PC-9 (cell line): ENCODE measurements at regions of chr15 and their contacts with region 1.

Region 1: GRCh38 chr15:71743861-71744382 is 66.4 kb upstream of the NR2E3 start:
- DNase-seq: peak in 1 of 2 experiments; percentile 37
- H3K4me3 ChIP-seq: no peak overlapping the region
- H3K27ac ChIP-seq: no peak overlapping the region
- H3K4me1 ChIP-seq: peaks cover 29% of the 10 kb centered on the region
- H3K27me3 ChIP-seq: no peaks in the 10 kb centered on the region
- CTCF ChIP-seq: peak; percentile 78

Region 2: DNA sequence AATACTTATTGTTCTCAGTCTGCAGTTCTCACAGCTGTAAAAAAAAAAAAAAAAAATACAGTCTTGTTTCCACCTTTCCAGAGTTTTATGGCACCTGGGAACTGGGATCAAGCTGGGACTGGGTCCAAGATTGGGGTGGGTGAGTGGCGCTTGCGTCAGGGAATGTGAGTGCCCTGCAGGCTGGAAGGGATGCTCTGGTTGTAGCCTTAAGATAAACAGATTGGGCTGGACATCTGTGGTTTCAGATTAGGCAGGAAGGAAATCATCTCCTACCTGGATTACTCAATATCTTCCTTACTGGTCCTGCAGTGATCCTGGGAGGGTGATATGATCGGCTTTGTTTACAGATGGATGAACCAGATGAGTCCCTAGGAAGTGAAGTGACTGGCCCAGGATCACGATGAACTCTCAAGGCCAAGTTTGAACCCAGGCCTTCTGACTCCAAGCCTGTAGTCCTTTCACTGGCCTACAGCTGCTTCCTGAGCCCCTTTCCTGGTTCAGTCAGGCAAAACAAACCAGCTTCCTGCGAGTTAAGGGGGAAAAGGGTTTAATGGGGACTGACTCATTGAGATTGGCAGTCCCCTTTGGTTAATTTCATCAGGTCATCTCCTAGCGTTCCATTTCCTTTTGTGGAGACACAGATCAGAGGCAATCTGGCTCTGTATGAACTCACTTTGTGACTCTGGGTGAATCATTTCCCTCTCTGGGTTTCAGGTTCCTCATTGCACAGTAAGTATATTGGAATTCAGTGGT is 448.9 kb before region 1 on chr15:
- CTCF ChIA-PET with region 1: no interaction called
- POLR2A ChIA-PET with region 1: no interaction called
- intact Hi-C with region 1: loop called (anchors 2 kb)
- DNase-seq: peak; percentile 78 to 99
- H3K4me3 ChIP-seq: 0 out of 2 replicates have a peak overlapping the region, but pooled peaks have one; percentile 21
- H3K27ac ChIP-seq: peak overlapping the region; percentile 100
- H3K4me1 ChIP-seq: peaks cover 70% of the 10 kb centered on the region
- H3K27me3 ChIP-seq: no peaks in the 10 kb centered on the region
- CTCF ChIP-seq: no peak

Region 3: GRCh38 chr15:71511796-71512681 is 231.9 kb before region 1 on chr15:
- CTCF ChIA-PET with region 1: interaction called, 14 read pairs
- POLR2A ChIA-PET with region 1: no interaction called
- intact Hi-C with region 1: no loop called
- DNase-seq: no peak
- H3K4me3 ChIP-seq: no peak overlapping the region
- H3K27ac ChIP-seq: no peak overlapping the region
- H3K4me1 ChIP-seq: no peaks in the 10 kb centered on the region
- H3K27me3 ChIP-seq: no peaks in the 10 kb centered on the region
- CTCF ChIP-seq: no peak

Region 4: DNA sequence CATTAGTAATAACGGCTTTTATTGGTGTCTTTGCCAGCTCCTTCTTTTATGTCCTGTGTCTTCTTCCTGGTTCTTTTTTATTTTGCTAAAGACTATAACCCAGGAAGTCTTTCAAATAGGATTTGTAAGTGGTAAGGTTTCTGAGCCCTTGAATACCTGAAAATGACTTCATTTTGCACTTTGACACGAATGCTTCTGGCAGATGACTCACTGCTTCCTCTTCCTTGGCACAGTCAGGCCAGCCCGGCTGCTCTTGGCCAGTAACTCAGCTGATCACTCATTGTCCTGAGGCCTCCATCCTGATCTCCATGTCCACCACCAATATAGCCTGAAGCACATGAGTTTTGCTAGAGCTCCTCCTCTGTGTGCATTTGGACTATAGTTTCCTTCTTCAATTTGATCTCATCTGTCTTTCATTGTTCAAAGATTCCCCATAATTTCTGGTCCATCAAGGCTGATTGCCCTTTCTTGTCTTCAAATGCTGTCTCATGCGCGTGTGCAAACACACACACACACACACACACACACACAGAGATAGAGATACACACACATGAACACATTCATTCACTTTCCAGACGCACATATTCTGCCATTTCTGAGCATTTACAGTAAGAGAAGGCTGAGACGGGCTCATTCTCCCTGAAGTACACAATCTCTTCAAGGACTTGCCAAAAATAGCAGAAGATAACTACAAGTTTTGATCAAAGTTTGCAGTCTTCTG is 17.9 kb after region 1 on chr15:
- CTCF ChIA-PET with region 1: interaction called, 9 read pairs
- POLR2A ChIA-PET with region 1: interaction called, 9 read pairs
- intact Hi-C with region 1: loop called (anchors 1 kb)
- DNase-seq: peak; percentile 79 to 96
- H3K4me3 ChIP-seq: no peak overlapping the region
- H3K27ac ChIP-seq: peak overlapping the region; percentile 76
- H3K4me1 ChIP-seq: peaks cover 17% of the 10 kb centered on the region
- H3K27me3 ChIP-seq: no peaks in the 10 kb centered on the region
- CTCF ChIP-seq: no peak

Region 5: GRCh38 chr15:71800835-71801745 is 57.2 kb after region 1 on chr15:
- CTCF ChIA-PET with region 1: interaction called, 15 read pairs
- POLR2A ChIA-PET with region 1: no interaction called
- intact Hi-C with region 1: no loop called
- DNase-seq: peak; percentile 60 to 65
- H3K4me3 ChIP-seq: no peak overlapping the region
- H3K27ac ChIP-seq: no peak overlapping the region
- H3K4me1 ChIP-seq: peaks cover 13% of the 10 kb centered on the region
- H3K27me3 ChIP-seq: no peaks in the 10 kb centered on the region
- CTCF ChIP-seq: peak; percentile 85

Region 6: DNA sequence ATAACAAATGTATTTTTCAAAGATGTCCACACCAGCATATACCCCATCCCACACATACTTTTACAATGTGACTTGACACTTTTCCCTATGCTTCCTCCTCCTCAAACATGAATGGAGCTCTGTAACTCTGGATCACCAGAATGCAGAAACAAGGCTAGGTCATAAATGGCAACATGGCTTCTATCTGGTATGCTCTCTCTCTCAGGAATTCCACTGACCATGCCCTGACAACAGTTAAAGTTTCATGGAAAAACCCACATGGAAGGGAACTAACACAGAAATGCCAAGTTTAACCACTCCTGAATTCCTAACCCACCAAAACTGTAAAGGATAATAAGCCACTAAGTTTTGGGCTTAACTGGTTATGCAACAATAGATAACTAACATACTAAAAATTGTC is 354.1 kb after region 1 on chr15:
- CTCF ChIA-PET with region 1: no interaction called
- POLR2A ChIA-PET with region 1: no interaction called
- intact Hi-C with region 1: no loop called
- DNase-seq: no peak
- H3K4me3 ChIP-seq: no peak overlapping the region
- H3K27ac ChIP-seq: no peak overlapping the region
- H3K4me1 ChIP-seq: no peaks in the 10 kb centered on the region
- H3K27me3 ChIP-seq: no peaks in the 10 kb centered on the region
- CTCF ChIP-seq: no peak

Region 7: DNA sequence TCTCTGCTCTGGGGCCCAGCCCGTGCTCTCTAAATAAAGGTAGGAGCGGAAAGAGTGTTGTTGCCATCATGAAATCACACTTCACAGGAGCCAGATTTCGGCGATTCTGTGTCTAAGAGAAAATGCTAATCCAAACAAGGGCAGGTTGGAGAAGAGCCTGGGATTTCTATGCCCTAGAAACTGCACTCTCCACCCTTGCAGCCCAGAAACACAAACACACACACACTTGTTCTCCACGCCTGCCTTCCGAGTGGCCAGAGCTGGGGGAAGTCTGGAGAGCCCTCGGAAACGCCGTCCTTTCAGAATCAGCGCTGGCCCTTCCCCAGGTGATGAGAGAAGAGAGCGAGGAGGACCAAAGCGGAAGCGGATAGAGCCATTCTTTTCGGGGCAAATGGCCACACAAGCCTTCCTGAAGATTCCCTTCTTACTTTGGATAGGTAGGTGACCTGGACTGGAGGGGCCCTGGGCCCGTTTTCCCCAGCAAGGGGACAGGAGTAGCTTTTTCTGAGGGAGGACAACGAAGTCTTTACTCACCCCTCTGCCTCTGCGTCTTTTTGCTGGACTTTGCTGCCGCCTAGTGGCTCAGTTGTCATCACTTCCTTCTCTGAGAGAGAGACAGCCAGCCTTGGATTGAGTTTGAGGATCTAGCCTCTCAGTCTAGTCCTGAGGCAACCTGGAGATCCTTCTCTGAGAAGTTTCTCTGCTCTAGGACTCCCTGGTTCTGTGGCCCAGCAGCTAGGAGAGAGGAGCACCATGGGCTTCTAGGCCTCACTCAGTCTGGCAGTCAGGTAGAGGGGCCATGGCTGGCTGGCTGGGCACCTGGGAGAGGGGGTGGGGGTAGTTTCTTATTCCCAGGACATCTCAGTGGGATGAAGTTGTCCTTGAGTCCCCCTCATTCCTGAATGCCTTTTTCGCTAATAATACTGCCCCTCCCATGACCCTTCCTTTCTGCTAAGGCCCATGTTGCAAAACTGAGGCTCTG is 412.0 kb after region 1 on chr15:
- CTCF ChIA-PET with region 1: interaction called, 3 read pairs
- POLR2A ChIA-PET with region 1: interaction called, 4 read pairs
- intact Hi-C with region 1: loop called (anchors 2 kb)
- DNase-seq: peak; percentile 68 to 81
- H3K4me3 ChIP-seq: peak overlapping the region; percentile 4; the same call in 1 of the 2 replicates
- H3K27ac ChIP-seq: no peak overlapping the region
- H3K4me1 ChIP-seq: peaks cover 28% of the 10 kb centered on the region
- H3K27me3 ChIP-seq: no peaks in the 10 kb centered on the region
- CTCF ChIP-seq: peak; percentile 93

Region 8: GRCh38 chr15:72265031-72265430 is 521.1 kb after region 1 on chr15:
- CTCF ChIA-PET with region 1: interaction called, 21 read pairs
- POLR2A ChIA-PET with region 1: no interaction called
- intact Hi-C with region 1: no loop called
- DNase-seq: no peak
- H3K4me3 ChIP-seq: no peak overlapping the region
- H3K27ac ChIP-seq: no peak overlapping the region
- H3K4me1 ChIP-seq: no peaks in the 10 kb centered on the region
- H3K27me3 ChIP-seq: no peaks in the 10 kb centered on the region
- CTCF ChIP-seq: no peak

Region 9: GRCh38 chr15:72389231-72389630 is 645.3 kb after region 1 on chr15:
- CTCF ChIA-PET with region 1: no interaction called
- POLR2A ChIA-PET with region 1: no interaction called
- intact Hi-C with region 1: no loop called
- DNase-seq: no peak
- H3K4me3 ChIP-seq: no peak overlapping the region
- H3K27ac ChIP-seq: no peak overlapping the region
- H3K4me1 ChIP-seq: no peaks in the 10 kb centered on the region
- H3K27me3 ChIP-seq: peaks cover 64% of the 10 kb centered on the region
- CTCF ChIP-seq: no peak